Heart right ventricle (tissue), 16 donors: ENCODE measurements at regions of chr2 and their contacts with region 1.

Region 1: DNA sequence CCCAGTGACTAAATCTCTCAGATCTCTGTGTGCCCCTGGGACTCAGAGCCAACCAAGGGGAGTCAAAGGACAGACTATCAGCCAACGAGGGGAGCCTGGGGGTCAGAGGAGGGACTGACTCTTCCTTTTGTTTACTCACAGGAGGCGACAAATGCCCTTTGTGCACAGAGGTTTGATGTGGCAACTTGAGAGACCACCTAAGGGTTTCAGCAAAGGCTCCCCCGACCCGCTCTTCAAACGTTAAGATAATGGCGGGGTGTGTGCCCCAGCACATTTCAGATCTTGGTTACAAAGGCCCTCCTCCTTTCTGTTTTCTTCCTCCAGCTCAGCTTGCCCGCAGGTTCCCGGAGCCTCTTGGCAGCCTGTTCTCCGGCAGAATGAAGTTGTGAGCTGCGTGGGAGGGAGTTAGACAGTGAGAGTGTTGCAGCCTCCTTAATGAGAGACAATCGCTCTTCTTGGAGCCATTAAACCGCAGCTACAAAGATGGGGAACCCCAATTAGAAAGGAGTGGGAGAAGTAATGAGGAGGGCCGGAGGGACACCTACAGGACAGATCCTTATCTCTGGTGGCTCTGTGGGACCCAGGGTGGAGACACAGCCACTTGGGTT is 76.2 kb downstream of the KIAA2012 start:
- DNase-seq: peak; percentile 30 to 61
- ATAC-seq: peak; percentile 46 to 75 (median 63)
- H3K4me3 ChIP-seq: peak overlapping the region in 1 of 10 donors; percentile 7
- H3K27ac ChIP-seq: peak overlapping the region in 6 of 10 donors; percentile 25 to 68 (median 54)
- H3K4me1 ChIP-seq: peaks cover 0 to 34% (median 19%) of the 10 kb centered on the region in 9 donors
- H3K27me3 ChIP-seq: peaks cover 0 to 4% (median 0%) of the 10 kb centered on the region in 7 donors
- CTCF ChIP-seq: no peak

Region 2: DNA sequence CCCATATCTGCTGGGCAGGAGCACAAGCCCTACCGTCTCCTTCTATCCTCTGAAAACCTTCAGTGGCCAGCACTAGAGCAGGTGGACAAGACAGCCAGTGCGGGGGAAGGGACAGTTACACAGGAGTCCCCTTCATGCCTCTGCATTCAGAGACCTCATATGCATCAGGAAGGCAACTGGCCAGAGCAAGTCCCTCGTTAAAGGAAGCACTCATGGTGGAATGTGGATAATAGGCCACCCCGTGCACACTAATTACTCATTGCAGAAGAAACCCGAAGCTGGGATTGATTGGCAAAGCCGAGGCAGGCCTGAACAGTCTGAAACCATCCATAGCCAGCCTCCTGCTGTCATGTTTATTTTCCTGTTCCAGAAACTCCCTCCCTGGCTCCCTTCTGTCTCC is 65.0 kb before region 1 on chr2:
- intact Hi-C with region 1: loop called in 1 of 10 experiments (anchors 10 kb)
- DNase-seq: no peak
- ATAC-seq: peak in 1 of 8 donors; percentile 11
- H3K4me3 ChIP-seq: no peak overlapping the region
- H3K27ac ChIP-seq: no peak overlapping the region
- H3K4me1 ChIP-seq: peaks cover 0 to 6% (median 0%) of the 10 kb centered on the region in 9 donors
- H3K27me3 ChIP-seq: no peaks in the 10 kb centered on the region
- CTCF ChIP-seq: no peak

Region 3: DNA sequence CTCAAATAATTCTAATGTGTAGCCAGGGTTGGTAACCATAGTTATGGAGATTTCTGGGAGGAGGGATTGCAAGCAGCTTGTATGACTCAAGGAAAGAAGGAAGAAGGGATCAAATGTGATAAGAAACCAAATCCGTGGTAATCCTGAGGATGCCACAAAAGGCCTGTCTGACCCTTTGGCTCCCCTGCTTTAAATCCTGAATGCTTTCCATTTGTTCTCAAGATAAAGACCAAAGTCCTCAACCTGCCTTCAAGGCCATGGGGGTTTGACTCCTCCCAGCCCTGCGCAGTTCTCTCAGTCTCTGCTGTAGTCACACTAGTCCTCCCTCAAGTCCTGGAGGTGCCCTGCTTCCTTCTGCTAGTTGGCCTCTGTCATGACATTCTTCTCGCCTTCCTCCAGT is 15.2 kb after region 1 on chr2:
- intact Hi-C with region 1: loop called in 1 of 10 experiments (anchors 1 kb)
- DNase-seq: no peak
- ATAC-seq: no peak
- H3K4me3 ChIP-seq: no peak overlapping the region
- H3K27ac ChIP-seq: no peak overlapping the region
- H3K4me1 ChIP-seq: peaks cover 0 to 14% (median 0%) of the 10 kb centered on the region in 9 donors
- H3K27me3 ChIP-seq: no peaks in the 10 kb centered on the region
- CTCF ChIP-seq: no peak